Gastrocnemius medialis (tissue), 4 donors: ENCODE measurements at regions of chr12 and their contacts with region 1.

Region 1: GRCh38 chr12:6723607-6724396 is at the start of gene COPS7A:
- DNase-seq: peak; percentile 96 to 98
- ATAC-seq: peak; percentile 99
- H3K4me3 ChIP-seq: peak within 1 kb of the TSS; percentile 55 to 80 (median 74)
- H3K27ac ChIP-seq: peak within 1 kb of the TSS; percentile 81 to 90 (median 86)
- H3K4me1 ChIP-seq: peaks cover 6 to 10% of the 10 kb centered on the region in 2 donors
- H3K27me3 ChIP-seq: no peaks in the 10 kb centered on the region
- CTCF ChIP-seq: no peak
- POLR2A ChIP-seq: peak; percentile 39 to 58
- total RNA-seq, gene COPS7A: 82.0 to 132 (median 99.0) TPM

Region 2: DNA sequence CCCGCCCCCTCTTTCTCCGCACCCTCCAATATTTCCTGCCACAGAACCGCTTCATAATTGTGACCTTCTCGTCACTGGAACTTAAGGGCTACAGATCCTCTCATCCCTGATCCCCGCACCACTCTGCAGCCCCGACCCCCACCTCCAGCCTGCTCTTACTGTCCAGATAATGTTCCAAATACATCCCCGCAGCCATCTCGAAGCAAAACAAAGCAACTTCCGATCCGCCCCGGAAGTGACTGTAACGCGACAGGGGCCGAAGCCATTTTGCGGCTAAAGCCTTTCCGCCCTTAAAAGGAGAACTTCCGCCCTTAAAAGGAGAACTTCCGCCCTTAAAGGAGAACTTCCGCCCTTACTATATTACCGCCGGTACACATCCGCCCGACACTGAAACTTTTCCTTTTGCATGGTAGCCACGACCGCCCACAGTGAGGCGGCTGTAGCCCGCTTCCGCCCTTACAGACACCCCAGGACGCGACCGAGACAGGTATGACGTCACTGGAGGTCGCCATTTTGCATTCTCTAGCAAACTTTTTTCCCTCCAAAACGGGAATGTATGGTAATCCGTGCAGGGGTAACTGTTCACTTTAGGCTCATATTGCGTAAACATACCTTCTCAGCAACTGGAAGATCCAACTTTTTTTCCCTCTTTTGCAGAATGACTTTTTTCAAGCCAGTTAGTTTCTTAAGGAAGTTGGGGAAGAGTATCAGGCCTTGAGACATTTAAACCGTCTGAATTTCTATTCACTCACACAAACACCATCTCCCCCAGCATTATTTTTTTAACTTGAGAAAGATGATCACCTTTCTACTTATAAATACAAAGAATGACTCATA is 60.7 kb before region 1 on chr12 and contains the start of gene ING4:
- in situ Hi-C with region 1: loop called in 1 of 4 experiments (anchors 10 kb)
- intact Hi-C with region 1: loop called (anchors 1 kb)
- DNase-seq: peak; percentile 97 to 99
- ATAC-seq: peak; percentile 100
- H3K4me3 ChIP-seq: peak within 1 kb of the TSS; percentile 66 to 97 (median 81)
- H3K27ac ChIP-seq: peak within 1 kb of the TSS; percentile 78 to 84 (median 80)
- H3K4me1 ChIP-seq: peaks cover 12 to 18% of the 10 kb centered on the region in 2 donors
- H3K27me3 ChIP-seq: no peaks in the 10 kb centered on the region
- CTCF ChIP-seq: no peak
- POLR2A ChIP-seq: no peak
- total RNA-seq, gene ING4: 12.8 to 28.9 (median 19.7) TPM

Region 3: GRCh38 chr12:6851921-6852650 is 128.3 kb after region 1 on chr12 and contains the start of gene USP5:
- in situ Hi-C with region 1: no loop called
- intact Hi-C with region 1: loop called (anchors 1 kb)
- DNase-seq: peak; percentile 99
- ATAC-seq: peak; percentile 85 to 88
- H3K4me3 ChIP-seq: peak within 1 kb of the TSS; percentile 68 to 83 (median 74)
- H3K27ac ChIP-seq: peak within 1 kb of the TSS; percentile 86 to 97 (median 92)
- H3K4me1 ChIP-seq: peaks cover 13 to 17% of the 10 kb centered on the region in 2 donors
- H3K27me3 ChIP-seq: no peaks in the 10 kb centered on the region
- CTCF ChIP-seq: peak in 2 of 5 experiments; percentile 13 to 23
- POLR2A ChIP-seq: peak in 1 of 2 donors; percentile 64
- total RNA-seq, gene USP5: 66.4 to 120 (median 74.1) TPM